ENCODE measurements at regions of chr1 and their contacts with region 1.

Region 1: DNA sequence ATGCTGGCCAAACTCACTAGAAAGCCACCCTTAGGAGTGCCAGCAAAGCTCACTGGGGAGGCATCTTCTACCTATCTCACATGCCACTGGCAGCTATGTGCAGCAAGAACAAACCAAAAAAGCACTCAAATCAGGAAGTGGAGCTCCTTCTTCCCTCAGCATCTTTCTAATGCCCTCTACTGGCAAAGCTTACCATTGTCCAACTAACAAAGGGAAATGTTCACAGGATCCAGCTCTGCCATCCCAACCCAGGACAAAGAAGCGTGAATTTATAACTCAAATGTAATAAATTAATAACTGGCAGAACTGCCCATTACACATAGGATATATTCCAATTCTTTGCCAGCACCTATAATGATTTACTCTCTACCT is 38.9 kb downstream of the LEPR start:
- DNase-seq: peak; percentile 12
- H3K4me3 Mint-ChIP-seq: no peak overlapping the region
- H3K27ac Mint-ChIP-seq: no peak overlapping the region
- H3K4me1 Mint-ChIP-seq: peaks cover 18% of the 10 kb centered on the region
- H3K27me3 Mint-ChIP-seq: no peaks in the 10 kb centered on the region

Region 2: GRCh38 chr1:65214340-65215027 is 244.9 kb before region 1 on chr1:
- CTCF ChIA-PET with region 1: interaction called, 5 read pairs
- intact Hi-C with region 1: loop called (anchors 1 kb)
- DNase-seq: no peak
- H3K4me3 Mint-ChIP-seq: no peak overlapping the region
- H3K27ac Mint-ChIP-seq: no peak overlapping the region
- H3K4me1 Mint-ChIP-seq: peaks cover 41% of the 10 kb centered on the region
- H3K27me3 Mint-ChIP-seq: no peaks in the 10 kb centered on the region

Region 3: DNA sequence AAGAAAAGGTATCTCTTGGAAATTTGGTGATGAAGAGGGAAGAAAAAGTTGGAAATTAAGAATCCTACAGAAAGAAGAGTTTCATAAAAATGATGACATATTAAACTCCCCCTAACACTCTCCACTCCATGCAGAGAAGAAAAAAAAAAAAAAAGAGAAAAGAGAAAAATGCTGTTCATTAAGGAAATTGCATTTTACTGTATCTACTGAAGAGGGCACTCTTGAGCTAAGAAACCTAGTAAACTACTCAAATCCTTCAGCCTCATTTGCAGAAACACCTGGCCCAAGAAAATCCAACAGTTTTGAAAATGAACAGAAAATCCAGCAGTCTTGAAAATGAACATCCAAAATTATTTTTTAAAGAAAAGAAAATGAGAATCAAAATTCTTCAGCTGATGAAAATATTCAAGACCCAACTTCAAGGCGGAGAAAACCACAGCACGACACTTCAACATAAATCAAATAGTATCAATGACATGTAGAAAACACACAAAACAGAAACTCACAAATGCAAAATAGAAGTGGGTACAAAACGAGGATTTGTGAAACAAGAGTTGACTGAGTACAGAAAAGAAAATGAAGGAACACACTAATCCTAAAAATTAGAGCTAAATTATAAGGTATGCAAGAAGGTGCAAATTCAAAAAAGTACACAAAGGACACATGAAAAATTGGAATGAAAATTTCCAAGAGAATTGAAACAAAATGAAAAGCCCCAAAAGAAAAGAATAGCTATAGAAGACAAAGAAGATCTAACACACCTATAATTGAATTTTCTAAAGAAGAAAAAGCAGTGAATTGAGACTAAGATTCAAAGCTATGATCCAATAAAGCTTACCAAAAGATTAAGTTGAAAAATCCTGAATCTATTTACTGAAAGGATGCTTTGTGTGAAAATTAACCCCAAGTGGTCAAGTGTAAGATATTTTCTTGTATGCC is 223.2 kb before region 1 on chr1:
- CTCF ChIA-PET with region 1: interaction called, 17 read pairs
- intact Hi-C with region 1: loop called (anchors 1 kb)
- DNase-seq: no peak
- H3K4me3 Mint-ChIP-seq: no peak overlapping the region
- H3K27ac Mint-ChIP-seq: no peak overlapping the region
- H3K4me1 Mint-ChIP-seq: peaks cover 7% of the 10 kb centered on the region
- H3K27me3 Mint-ChIP-seq: peaks cover 3% of the 10 kb centered on the region

Region 4: GRCh38 chr1:65431111-65431705 is 28.2 kb before region 1 on chr1:
- CTCF ChIA-PET with region 1: interaction called, 13 read pairs
- intact Hi-C with region 1: no loop called
- DNase-seq: no peak
- H3K4me3 Mint-ChIP-seq: no peak overlapping the region
- H3K27ac Mint-ChIP-seq: no peak overlapping the region
- H3K4me1 Mint-ChIP-seq: no peaks in the 10 kb centered on the region
- H3K27me3 Mint-ChIP-seq: no peaks in the 10 kb centered on the region